MCF 10A (cell line): ENCODE measurements at regions of chr7 and their contacts with region 1.

Region 1: DNA sequence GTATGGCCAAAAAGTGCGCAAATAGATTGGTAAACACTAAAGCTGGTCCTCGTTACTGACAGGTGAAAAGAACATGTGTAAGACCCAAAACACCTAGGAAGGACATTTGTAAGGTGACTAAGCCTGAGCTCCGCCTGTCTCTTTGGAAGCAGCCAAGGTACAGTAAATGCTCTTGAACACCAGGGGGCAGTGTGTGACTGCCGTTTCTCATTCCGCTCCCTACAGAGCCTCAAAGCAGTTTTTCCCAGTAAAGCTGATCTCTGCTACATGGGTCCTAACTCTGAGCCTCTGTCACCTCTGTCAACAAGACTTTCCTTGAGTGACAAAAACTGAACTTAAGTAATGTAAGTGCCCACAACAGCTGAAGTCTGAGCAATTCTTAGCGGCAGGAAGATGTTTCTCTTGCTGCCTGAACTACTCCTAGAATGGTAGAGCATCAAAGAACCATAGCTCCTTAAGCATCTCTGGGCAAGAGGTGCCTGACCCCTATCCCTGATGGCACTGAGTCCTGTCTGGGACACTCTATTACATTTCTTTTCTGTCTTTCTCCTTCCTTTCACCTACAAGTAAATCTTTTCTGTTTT is 238.0 kb upstream of the INHBA start:
- DNase-seq: peak; percentile 86
- H3K4me3 Mint-ChIP-seq: no peak overlapping the region
- H3K27ac Mint-ChIP-seq: no peak overlapping the region
- H3K4me1 Mint-ChIP-seq: peaks cover 10% of the 10 kb centered on the region
- H3K27me3 Mint-ChIP-seq: no peaks in the 10 kb centered on the region
- CTCF ChIP-seq: peak; percentile 79

Region 2: GRCh38 chr7:41567031-41567730 is 373.7 kb before region 1 on chr7:
- CTCF ChIA-PET with region 1: no interaction called
- POLR2A ChIA-PET with region 1: no interaction called
- intact Hi-C with region 1: no loop called
- DNase-seq: no peak
- H3K4me3 Mint-ChIP-seq: no peak overlapping the region
- H3K27ac Mint-ChIP-seq: no peak overlapping the region
- H3K4me1 Mint-ChIP-seq: no peaks in the 10 kb centered on the region
- H3K27me3 Mint-ChIP-seq: peaks cover 9% of the 10 kb centered on the region
- CTCF ChIP-seq: no peak

Region 3: GRCh38 chr7:41930538-41931262 is 10.2 kb before region 1 on chr7:
- CTCF ChIA-PET with region 1: interaction called, 20 read pairs
- POLR2A ChIA-PET with region 1: no interaction called
- intact Hi-C with region 1: no loop called
- DNase-seq: no peak
- H3K4me3 Mint-ChIP-seq: no peak overlapping the region
- H3K27ac Mint-ChIP-seq: peak overlapping the region; percentile 14
- H3K4me1 Mint-ChIP-seq: no peaks in the 10 kb centered on the region
- H3K27me3 Mint-ChIP-seq: no peaks in the 10 kb centered on the region
- CTCF ChIP-seq: no peak

Region 4: DNA sequence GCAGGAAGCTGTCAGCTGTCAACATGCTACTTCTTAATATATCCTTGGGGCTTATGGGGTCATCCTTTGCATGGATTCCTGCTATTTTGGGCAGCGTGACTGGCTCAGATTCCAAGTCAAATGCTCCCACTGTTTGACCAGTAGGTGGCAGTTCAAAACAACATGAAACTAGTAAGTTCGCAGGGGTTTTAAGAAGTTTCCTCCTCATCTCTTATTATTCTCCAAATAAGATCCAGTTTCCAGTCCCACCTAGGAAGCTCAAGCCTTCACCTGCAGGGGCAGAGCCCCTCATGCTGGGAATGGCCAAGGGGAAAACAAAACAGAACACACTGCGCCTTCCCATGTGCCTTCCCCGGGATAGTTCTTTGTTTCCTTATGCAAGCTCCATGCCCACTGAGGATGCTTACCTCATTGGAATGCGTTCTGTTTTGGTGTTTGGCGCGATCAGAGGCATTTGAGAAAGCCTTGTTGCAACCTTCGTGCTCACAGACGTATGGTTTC is 36.3 kb after region 1 on chr7:
- CTCF ChIA-PET with region 1: interaction called, 137 read pairs
- POLR2A ChIA-PET with region 1: interaction called, 4 read pairs
- intact Hi-C with region 1: loop called (anchors 1 kb)
- DNase-seq: peak; percentile 62
- H3K4me3 Mint-ChIP-seq: no peak overlapping the region
- H3K27ac Mint-ChIP-seq: no peak overlapping the region
- H3K4me1 Mint-ChIP-seq: peaks cover 44% of the 10 kb centered on the region
- H3K27me3 Mint-ChIP-seq: no peaks in the 10 kb centered on the region
- CTCF ChIP-seq: peak; percentile 75

Region 5: GRCh38 chr7:42237162-42237821 is 296.4 kb after region 1 on chr7 and contains the start of gene GLI3:
- CTCF ChIA-PET with region 1: interaction called, 6 read pairs
- POLR2A ChIA-PET with region 1: no interaction called
- intact Hi-C with region 1: loop called (anchors 5 kb)
- DNase-seq: peak; percentile 95
- H3K4me3 Mint-ChIP-seq: peak within 1 kb of the TSS; percentile 97
- H3K27ac Mint-ChIP-seq: peak within 1 kb of the TSS; percentile 96
- H3K4me1 Mint-ChIP-seq: peaks cover 45% of the 10 kb centered on the region
- H3K27me3 Mint-ChIP-seq: no peaks in the 10 kb centered on the region
- CTCF ChIP-seq: peak; percentile 12
- total RNA-seq, gene GLI3: 23.1 and 27.6 TPM in 2 replicates

Region 6: GRCh38 chr7:42485301-42485766 is 544.5 kb after region 1 on chr7:
- CTCF ChIA-PET with region 1: no interaction called
- POLR2A ChIA-PET with region 1: no interaction called
- intact Hi-C with region 1: no loop called
- DNase-seq: no peak
- H3K4me3 Mint-ChIP-seq: no peak overlapping the region
- H3K27ac Mint-ChIP-seq: no peak overlapping the region
- H3K4me1 Mint-ChIP-seq: peaks cover under 1% of the 10 kb centered on the region
- H3K27me3 Mint-ChIP-seq: no peaks in the 10 kb centered on the region
- CTCF ChIP-seq: no peak

Region 7: DNA sequence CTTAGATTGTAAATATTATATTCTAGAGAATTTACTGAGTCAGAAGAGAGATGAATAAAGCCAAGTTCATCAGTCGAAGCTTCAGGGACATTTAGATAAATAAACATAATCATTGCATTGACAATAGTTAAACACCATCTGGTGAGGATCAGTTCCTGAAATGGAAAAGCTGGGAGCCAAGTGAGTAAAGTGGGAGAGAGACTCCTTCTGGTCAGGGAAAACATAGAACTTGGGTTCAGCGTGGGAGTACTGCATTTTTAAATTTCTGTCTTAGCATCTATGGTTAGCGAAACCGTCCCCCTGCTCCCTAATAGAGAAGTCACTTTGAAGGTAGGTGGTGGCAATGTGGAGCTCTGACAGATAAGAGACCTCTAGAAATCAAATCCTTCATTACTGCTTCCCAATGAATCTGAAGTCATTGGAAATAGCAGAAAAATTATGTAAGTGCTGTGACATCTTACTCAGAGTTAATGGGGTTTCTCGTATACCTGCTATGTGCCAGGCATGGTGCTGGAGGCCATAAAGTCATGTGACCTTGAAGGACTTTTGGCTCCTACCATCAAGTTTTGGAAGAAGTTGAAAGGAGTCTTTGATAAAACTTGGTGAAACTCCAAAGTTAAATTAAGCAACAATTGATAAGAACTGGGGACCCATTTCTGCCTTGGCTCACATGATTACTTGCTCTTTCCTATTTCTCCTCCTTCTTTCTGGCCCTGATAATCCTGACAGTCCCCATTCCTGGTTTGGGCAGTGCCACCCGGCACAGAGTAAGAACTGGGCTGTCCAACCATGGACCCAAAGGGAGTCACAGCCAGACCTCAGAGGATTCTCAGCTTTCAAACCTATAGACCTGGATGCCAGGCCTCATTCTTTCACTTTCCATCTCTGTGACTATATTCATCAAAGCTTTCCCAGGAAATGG is 759.8 kb after region 1 on chr7:
- CTCF ChIA-PET with region 1: interaction called, 10 read pairs
- POLR2A ChIA-PET with region 1: no interaction called
- intact Hi-C with region 1: no loop called
- DNase-seq: no peak
- H3K4me3 Mint-ChIP-seq: no peak overlapping the region
- H3K27ac Mint-ChIP-seq: no peak overlapping the region
- H3K4me1 Mint-ChIP-seq: no peaks in the 10 kb centered on the region
- H3K27me3 Mint-ChIP-seq: no peaks in the 10 kb centered on the region
- CTCF ChIP-seq: no peak

Region 8: DNA sequence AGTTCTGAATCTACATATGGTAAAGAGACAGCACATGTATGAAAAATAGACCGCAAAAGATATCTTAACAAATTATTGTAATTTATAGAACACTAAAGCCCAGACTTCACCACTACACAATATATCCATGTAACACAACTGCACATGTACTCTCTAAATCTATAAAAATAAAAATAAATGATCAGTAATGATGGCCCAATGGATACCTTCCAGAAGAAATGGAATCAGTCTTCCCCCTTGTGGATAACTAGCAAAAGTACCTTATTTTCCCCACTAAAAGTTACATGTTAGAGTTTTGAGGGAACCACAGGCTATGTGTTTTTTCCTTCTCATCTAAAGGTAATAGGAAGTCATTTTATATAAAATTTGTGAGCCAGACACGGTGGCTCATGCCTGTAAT is 945.3 kb after region 1 on chr7:
- CTCF ChIA-PET with region 1: interaction called, 50 read pairs
- POLR2A ChIA-PET with region 1: interaction called, 4 read pairs
- intact Hi-C with region 1: no loop called
- DNase-seq: peak; percentile 42
- H3K4me3 Mint-ChIP-seq: no peak overlapping the region
- H3K27ac Mint-ChIP-seq: no peak overlapping the region
- H3K4me1 Mint-ChIP-seq: peaks cover 9% of the 10 kb centered on the region
- H3K27me3 Mint-ChIP-seq: no peaks in the 10 kb centered on the region
- CTCF ChIP-seq: peak; percentile 56